ENCODE measurements at regions of chr19 and their contacts with region 1.

Region 1: GRCh38 chr19:11090054-11090900 is 1.0 kb downstream of the LDLR start:
- DNase-seq: peak; percentile 100
- ATAC-seq: peak; percentile 93

Region 2: DNA sequence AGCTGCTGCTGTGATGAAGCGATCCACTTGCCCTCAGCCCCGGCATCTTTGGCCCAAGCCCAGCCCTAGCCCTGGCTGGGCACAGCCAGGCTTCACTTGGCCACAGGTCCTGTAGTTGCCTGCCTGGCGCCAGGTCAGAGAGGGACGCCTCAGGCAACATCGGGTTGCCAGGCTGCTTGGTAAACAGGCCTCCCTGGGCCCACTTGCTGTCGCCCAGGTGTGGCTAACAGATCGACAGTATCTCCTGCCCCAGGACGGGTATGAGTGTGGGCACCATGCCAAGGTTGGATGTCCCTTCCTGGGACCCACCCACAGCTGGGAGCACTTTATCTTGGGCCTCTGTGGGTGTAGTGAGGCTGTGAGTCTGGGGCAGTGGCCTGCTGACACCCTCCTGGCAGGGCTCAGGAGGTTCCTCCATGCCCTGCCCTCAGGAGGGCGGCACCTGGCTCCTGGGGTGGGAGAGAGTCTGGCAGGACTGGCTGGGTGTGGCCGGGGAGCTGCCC is 191.1 kb before region 1 on chr19:
- intact Hi-C with region 1: no loop called
- DNase-seq: no peak
- ATAC-seq: peak; percentile 85

Region 3: DNA sequence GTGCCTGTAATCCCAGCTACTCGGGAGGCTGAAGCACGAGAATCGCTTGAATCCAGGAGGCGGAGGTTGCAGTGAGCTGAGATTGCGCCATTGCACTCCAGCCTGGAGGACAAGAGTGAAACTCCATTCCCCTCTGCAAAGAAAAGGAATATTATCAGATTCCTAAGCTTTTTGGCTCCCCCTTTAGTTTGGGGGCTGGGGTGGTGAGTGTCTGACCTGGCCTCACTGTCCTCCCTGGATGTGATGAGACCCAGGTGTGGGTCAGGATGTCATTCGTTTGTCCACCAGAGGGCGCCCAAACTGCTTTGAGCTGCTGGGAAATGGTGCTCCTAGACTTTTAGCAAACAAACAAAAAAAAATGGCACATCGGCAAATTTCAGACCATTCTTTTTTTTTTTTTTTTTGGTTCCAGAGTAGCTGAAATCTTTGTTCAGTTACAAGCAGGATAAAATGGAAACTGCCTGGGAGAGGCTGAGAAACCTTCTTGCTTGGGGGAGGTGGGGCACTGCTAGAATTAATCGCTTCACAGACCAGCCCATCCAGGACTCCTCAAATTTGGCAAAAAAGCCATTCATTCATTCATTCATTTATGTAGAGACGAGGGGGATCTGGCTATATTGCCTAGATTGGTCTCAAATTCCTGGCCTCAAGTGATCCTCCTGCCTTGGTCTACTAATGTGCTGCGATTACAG is 35.9 kb after region 1 on chr19:
- intact Hi-C with region 1: loop called (anchors 5 kb)
- DNase-seq: peak; percentile 78
- ATAC-seq: peak; percentile 69

Measured in Right ventricle myocardium inferior (tissue), 1 donor.